ENCODE measurements at regions of chr20 and their contacts with region 1.

Region 1: DNA sequence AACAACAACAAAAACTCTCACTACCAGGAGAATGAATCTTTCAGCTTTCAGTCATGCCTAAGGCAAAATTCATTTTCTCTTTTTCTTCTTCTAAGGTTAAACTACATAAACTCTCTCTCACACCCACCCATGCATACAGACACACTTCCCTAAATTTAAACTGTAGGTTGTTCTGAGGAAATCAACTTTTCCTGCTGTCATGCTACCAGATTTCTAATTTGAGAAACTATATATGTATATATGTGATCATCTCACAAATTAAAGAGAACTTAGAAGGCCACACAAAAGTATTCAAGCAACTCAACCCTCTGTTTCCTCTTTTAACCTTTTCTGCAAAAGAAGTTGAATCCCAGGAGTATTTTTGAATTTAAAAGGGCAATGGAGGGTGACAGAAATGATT is 532.5 kb downstream of the KIF16B start:
- DNase-seq: no peak
- ATAC-seq: peak; percentile 80
- H3K4me3 Mint-ChIP-seq: peak overlapping the region; percentile 60
- H3K27ac Mint-ChIP-seq: peak overlapping the region; percentile 79
- H3K4me1 Mint-ChIP-seq: peaks cover 81% of the 10 kb centered on the region
- H3K27me3 Mint-ChIP-seq: no peaks in the 10 kb centered on the region
- CTCF ChIP-seq: no peak

Region 2: DNA sequence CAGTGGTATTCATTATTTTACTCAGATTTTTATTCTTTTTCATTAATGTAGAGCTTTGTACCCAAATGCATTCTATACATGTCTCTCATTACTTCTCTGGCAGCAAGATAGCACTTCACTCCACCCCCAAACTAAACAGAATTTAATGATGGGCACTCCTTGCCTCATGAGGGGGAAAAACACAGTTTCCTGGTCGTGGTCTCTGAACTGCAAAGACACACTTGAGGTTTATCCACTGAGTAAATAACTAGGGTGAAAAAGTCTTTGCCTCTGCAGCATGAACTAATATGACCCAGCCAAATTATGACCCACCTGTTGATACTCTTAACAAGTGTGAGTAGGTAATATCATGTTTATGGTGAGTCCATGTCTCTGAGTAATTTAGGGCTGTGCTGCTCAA is 918.1 kb before region 1 on chr20:
- CTCF ChIA-PET with region 1: no interaction called
- POLR2A ChIA-PET with region 1: no interaction called
- intact Hi-C with region 1: no loop called
- DNase-seq: no peak
- ATAC-seq: no peak
- H3K4me3 Mint-ChIP-seq: no peak overlapping the region
- H3K27ac Mint-ChIP-seq: no peak overlapping the region
- H3K4me1 Mint-ChIP-seq: no peaks in the 10 kb centered on the region
- H3K27me3 Mint-ChIP-seq: peaks cover 7% of the 10 kb centered on the region
- CTCF ChIP-seq: no peak

Region 3: DNA sequence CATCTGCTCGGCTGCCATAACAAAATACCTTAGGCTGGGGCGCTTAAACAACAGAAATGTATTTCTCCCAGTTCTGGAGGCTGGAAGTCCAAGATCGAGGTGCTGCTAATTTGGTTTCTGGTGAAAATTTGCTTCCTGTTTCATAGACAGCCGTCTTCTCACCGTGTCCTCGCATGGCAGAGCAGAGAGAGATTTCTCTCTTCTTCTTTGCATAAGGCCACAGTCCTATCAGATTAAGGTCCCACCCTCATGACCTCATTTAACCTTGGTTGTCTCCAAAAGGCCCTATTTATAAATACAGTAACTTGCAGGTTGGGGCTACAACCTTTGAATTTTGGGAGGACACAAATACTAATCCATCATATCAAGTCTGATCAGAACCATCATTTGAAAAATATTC is 11.8 kb before region 1 on chr20:
- CTCF ChIA-PET with region 1: no interaction called
- POLR2A ChIA-PET with region 1: no interaction called
- intact Hi-C with region 1: loop called (anchors 1 kb)
- DNase-seq: no peak
- ATAC-seq: peak; percentile 88
- H3K4me3 Mint-ChIP-seq: peak overlapping the region; percentile 46
- H3K27ac Mint-ChIP-seq: peak overlapping the region; percentile 72
- H3K4me1 Mint-ChIP-seq: peaks cover 68% of the 10 kb centered on the region
- H3K27me3 Mint-ChIP-seq: no peaks in the 10 kb centered on the region
- CTCF ChIP-seq: no peak

Region 4: GRCh38 chr20:16069389-16070010 is 28.8 kb after region 1 on chr20:
- CTCF ChIA-PET with region 1: no interaction called
- POLR2A ChIA-PET with region 1: interaction called, 3 read pairs
- intact Hi-C with region 1: loop called (anchors 1 kb)
- DNase-seq: no peak
- ATAC-seq: peak; percentile 81
- H3K4me3 Mint-ChIP-seq: peak overlapping the region; percentile 3
- H3K27ac Mint-ChIP-seq: peak overlapping the region; percentile 88
- H3K4me1 Mint-ChIP-seq: peaks cover 59% of the 10 kb centered on the region
- H3K27me3 Mint-ChIP-seq: no peaks in the 10 kb centered on the region
- CTCF ChIP-seq: no peak

Region 5: DNA sequence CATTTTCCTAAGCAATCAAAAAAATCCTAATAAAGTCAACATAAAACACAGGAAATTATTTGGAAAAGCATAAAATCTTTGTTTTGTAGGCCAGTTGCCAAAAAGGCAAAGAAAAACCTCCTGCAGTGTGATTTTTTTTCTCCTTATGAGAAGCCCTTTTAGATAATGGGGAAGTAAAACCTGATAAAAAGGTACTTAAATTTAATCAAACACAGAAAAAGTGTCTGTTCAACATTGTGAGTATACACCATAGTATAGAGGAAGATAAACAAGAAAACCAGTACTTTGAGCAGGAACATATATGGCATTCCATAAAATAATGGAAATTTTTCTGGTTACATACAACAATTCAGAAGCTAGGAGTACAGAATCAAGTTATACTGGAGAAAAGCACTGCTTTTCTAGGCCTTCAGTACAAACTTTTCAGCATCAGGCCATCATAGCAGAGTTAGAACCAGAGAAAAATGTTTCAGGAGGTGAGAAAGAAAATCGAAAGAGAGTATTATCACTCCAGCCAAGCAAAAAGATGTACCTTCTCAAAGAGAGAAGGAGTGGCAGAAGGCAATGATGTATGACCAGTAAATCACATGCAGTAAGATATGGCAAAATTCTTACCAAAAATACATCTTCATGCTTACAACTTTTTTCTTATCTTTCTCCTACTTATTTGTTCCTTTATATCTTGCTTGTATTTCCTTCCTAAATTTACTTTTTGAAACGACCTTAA is 37.6 kb after region 1 on chr20:
- CTCF ChIA-PET with region 1: no interaction called
- POLR2A ChIA-PET with region 1: interaction called, 4 read pairs
- intact Hi-C with region 1: loop called (anchors 2 kb)
- DNase-seq: no peak
- ATAC-seq: peak; percentile 66
- H3K4me3 Mint-ChIP-seq: peak overlapping the region; percentile 42
- H3K27ac Mint-ChIP-seq: peak overlapping the region; percentile 71
- H3K4me1 Mint-ChIP-seq: peaks cover 51% of the 10 kb centered on the region
- H3K27me3 Mint-ChIP-seq: no peaks in the 10 kb centered on the region
- CTCF ChIP-seq: no peak

Region 6: DNA sequence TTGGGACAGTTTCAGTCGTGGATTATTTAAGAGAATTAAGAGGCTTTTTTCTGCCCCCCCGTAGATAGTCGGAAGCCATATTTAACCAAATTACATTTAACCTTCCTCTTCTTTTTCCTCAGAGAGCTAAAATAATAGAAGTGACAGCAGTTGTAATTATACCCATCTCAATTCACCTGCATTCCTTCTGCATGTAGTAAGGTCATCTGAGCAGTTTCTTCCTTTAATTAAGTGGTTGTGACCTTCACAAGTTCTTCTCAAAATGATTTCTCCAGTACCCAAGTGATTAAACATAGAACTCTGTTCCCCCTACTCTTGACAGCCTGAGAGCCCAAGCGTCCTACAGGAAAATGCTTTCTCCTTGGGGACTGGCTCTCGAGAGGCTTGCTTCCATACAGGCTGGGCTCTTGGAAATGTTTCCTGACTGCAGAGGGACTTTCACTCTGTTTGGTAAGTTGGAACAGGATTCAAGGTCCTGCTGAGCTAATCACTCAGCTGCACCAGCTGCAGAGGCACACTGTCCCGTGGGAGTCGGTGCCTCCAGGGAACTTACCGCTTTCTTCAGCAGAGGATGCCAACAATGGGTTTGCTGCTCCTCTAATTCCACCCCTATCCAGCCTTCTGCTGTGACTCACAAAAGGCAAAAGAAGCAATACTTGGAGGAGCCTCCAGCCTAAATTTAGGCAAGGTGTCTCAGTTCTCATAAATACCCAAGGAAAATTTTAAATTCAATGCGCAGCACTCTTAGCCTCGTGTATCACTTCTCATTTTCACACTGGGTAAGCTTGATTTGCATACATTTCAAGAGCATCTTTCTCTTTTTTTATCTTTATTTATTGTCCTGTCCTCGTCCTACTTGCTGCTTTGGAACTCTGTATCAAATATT is 117.6 kb after region 1 on chr20:
- CTCF ChIA-PET with region 1: no interaction called
- POLR2A ChIA-PET with region 1: interaction called, 3 read pairs
- intact Hi-C with region 1: loop called (anchors 2 kb)
- DNase-seq: peak; percentile 48
- ATAC-seq: peak; percentile 85
- H3K4me3 Mint-ChIP-seq: peak overlapping the region; percentile 81
- H3K27ac Mint-ChIP-seq: peak overlapping the region; percentile 96
- H3K4me1 Mint-ChIP-seq: peaks cover 66% of the 10 kb centered on the region
- H3K27me3 Mint-ChIP-seq: no peaks in the 10 kb centered on the region
- CTCF ChIP-seq: no peak

Region 7: GRCh38 chr20:16415071-16416053 is 374.6 kb after region 1 on chr20:
- CTCF ChIA-PET with region 1: no interaction called
- POLR2A ChIA-PET with region 1: no interaction called
- intact Hi-C with region 1: no loop called
- DNase-seq: no peak
- ATAC-seq: no peak
- H3K4me3 Mint-ChIP-seq: no peak overlapping the region
- H3K27ac Mint-ChIP-seq: no peak overlapping the region
- H3K4me1 Mint-ChIP-seq: no peaks in the 10 kb centered on the region
- H3K27me3 Mint-ChIP-seq: no peaks in the 10 kb centered on the region
- CTCF ChIP-seq: no peak

Measured in activated B cell treated with CpG ODN at 0.5 μM for 24 hours (primary cell).